Posterior cingulate gyrus (tissue), 11 donors: ENCODE measurements at regions of chr17 and their contacts with region 1.

Region 1: DNA sequence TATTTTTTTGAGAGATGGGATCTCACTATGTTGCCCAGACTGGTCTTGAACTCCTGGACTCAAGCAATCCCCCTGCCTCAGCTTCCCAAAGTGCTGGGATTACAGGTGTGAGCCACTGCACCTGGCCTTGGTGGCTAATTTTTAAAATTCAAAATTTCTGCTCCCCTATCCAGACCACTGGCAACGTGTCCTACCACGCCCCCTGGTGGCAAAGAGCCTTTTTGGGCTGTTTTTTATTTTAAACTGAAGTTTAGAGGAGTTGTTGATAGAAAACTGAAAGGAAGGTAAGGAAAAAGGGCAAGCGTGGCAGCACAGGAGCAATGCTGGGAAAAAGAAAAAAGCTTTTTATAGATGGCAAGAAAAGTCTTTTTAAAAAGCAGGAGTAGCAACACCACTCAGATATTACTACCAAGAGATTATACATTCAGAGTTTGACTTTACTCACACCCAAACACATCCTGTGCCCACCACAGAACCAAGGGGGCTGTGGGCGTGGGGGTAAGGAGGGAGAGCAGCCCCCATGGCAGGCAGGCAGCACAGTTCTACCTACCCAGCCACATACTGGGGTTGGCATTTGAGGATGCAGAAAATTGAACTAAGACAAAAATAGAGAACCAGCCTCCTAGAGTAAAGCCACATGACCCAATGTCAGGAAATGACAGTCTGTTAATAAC is 4.2 kb upstream of the MXRA7 start:
- DNase-seq: peak in 9 of 10 donors; percentile 53 to 89 (median 76)

Region 2: GRCh38 chr17:76345377-76345974 is 369.5 kb before region 1 on chr17:
- intact Hi-C with region 1: no loop called
- DNase-seq: peak in 2 of 10 donors; percentile 41

Region 3: DNA sequence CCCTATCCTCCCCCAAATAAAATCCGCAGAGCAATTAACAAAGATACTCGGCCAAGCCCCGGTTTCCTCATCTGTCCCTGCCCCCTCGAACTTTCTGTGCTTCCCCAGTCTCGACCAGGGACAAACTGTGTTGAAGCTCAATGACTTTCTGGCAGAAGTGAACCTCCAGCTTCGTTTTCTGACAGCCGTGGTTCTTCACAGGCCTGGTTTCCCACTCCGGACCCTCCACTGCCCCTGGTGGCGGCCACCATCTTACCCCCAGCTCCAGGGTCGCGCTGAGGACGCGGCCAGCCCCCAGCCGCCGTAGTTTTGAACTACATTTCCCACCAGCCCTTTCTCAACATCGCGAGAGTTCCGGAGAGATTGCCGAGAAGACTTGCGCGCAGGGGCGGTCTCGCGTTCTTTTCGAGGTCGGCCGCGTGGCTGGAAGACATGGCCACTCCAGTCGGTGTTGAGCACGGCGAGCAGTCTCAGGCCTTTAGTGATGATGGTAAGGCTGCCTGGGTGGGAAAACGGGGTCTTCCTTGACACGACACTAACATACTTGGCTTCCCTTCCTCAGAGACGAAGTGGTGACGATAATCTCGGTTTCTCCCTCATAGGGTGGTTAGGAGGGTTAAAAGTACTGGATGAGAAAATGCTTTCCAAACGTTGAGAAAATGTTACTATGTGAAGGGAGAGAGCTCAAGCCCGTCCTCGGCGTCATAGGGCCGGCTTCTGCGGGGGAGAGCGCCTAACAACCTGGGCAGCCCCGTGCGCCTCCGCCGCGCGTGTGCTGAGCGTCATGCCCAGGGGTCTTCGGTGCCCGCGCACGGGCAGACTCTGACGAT is 157.4 kb before region 1 on chr17:
- intact Hi-C with region 1: loop called (anchors 10 kb)
- DNase-seq: peak; percentile 85 to 99 (median 92)